Cardiac septum (tissue), 1 donor: ENCODE measurements at regions of chr22 and their contacts with region 1.

Region 1: GRCh38 chr22:45994491-45995404 is 17.8 kb upstream of the WNT7B start:
- DNase-seq: peak; percentile 93

Region 2: DNA sequence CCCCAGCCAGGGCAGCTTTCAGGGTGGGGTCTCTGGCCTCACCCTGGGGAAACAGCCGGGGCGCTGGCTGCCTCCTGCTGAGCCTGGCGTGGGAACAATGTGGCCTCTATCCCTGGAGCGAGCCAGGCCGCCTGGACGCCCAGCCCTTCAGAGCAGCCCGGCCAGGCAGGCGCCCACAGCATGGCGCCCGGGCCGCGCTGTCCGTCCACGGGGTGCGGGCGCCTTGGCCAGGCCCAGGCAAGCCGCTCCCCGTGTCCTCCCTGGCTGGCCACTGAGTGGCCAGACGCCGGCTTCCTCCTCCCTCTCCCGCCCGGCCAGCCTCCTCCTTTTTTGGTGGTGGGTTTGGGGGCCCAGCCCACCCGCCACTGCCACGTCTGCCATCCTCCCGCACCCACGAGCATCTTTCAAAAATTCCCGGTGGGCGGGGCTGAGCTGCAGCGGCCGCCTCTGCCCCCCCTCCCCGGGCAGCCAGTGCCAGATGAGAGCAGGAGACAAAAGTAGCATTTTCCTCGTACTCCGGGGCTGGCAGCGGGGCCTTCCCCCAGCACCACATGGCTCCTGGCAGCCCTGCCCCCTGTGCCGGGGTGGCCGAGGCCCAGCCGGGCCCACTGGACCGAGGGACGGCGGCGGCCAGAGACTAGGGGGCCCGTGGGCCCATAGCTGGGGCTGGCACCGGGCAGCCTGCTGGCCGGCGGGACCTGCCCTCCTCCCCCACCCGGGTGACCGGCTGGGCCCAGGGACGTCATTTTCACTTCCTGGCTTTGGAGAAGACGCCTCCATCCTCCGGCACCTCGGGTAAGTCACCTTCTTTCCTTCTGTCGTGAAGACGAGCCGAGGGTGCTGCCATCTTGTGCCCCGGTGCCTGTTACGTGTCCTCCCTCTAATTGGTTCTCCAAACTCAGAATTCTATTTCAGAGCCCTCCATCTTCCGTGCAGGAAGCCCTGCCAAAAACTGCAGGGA is 85.4 kb after region 1 on chr22:
- intact Hi-C with region 1: no loop called
- DNase-seq: peak; percentile 86

Region 3: DNA sequence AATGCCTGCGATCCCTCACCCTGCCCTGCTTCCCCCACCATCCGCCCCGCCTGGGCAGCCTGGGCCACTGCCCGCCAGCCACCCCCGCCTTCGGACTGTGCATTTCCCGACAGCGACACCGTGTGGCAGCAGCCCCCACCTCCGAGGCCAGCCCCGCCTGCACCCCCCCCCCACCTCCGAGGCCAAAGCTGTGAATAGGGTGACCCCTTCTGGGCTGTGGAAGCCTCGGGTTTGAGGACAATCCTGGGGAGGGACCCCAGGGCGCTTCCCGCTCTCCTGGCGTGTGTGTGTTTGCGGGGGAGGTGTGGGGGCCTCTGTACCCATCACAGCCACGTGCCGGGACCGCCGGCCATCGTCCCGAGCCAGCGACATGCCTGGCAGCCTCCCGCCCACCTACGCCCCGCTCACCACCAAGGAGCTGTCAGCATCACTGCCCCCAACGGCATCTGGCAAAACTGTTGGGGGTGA is 121.8 kb after region 1 on chr22:
- intact Hi-C with region 1: loop called (anchors 1 kb)
- DNase-seq: peak; percentile 96

Region 4: GRCh38 chr22:46309526-46310085 is 314.9 kb after region 1 on chr22:
- intact Hi-C with region 1: loop called (anchors 5 kb)
- DNase-seq: no peak